HEK293 (cell line): ENCODE measurements at regions of chr1 and their contacts with region 1.

Region 1: DNA sequence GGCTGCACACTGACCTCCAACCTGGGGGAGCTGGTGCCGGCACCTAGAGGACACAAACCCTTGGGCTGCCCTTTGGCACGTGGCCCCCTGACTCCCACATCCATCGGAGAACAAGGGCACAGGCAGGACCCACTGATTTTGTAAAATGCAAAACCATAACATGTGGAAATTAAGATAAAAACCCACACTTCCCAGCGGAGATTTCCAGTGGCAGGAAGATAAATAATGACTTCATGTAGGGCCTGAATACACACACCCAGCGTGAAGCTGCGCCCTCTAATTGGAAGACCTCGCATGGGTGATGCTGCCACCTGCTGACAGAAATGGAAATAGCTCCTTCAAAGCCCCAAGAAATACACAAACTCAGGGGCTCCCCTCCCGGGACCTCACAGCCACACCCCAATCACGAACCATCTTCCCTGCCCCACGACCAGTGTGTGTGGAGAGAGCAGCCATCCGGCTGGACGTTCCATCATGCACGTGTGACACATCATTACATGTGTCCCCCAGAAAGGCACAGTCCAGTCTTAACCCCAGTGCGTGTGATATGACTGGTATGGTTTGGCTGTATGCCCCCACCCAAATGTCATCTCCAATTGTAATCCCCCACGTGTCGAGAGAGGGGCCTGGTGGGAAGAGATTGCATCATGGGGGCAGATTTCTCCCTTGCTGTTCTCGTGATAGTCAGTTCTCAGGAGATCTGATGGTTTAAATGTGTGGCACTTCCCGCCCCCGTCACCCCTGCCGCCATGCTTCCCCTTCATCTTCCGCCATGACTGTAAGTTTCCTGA is 5.7 kb upstream of the TPRG1L start:
- H3K4me3 ChIP-seq: no peak overlapping the region
- H3K27ac ChIP-seq: no peak overlapping the region
- H3K4me1 ChIP-seq: no peaks in the 10 kb centered on the region
- CTCF ChIP-seq: peak; percentile 81

Region 2: GRCh38 chr1:3410142-3410925 is 208.7 kb before region 1 on chr1:
- CTCF ChIA-PET with region 1: no interaction called
- POLR2A ChIA-PET with region 1: no interaction called
- H3K4me3 ChIP-seq: no peak overlapping the region
- H3K27ac ChIP-seq: no peak overlapping the region
- H3K4me1 ChIP-seq: peaks cover 3% of the 10 kb centered on the region; the same call in 1 of the 2 replicates
- CTCF ChIP-seq: peak; percentile 86

Region 3: DNA sequence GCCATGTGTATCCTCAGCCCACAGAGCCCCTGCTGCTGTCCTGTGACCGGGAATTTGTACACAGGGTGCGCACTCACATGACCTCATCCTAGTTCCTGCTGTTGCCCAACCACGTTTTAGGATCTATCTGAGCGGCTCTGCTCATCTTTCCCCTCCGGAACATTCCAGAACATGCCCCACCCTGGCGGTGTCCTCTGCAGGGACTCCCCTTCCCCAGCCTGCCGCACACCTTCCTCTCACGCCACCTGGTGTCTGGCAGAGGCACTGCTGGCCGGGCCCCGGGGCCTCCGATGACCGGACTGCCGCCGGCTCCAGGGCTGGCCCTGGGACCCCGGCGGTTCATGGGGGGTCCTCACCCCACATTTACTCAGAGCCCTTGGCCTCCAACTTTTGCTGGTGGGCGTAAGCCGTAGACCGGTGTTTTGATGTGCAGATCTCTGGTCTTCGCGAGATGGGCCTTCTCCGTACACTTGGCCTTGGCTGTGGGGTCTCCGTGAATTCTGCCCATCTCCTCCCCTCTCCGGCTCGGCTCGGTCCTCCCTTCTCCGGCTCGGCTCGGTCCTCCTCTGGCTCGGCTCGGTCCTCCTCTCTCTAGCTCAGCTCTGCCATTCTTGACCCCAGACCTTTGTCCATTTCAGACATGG is 135.2 kb before region 1 on chr1:
- CTCF ChIA-PET with region 1: interaction called, 11 read pairs
- POLR2A ChIA-PET with region 1: no interaction called
- H3K4me3 ChIP-seq: no peak overlapping the region
- H3K27ac ChIP-seq: no peak overlapping the region
- H3K4me1 ChIP-seq: no peaks in the 10 kb centered on the region
- CTCF ChIP-seq: no peak

Region 4: DNA sequence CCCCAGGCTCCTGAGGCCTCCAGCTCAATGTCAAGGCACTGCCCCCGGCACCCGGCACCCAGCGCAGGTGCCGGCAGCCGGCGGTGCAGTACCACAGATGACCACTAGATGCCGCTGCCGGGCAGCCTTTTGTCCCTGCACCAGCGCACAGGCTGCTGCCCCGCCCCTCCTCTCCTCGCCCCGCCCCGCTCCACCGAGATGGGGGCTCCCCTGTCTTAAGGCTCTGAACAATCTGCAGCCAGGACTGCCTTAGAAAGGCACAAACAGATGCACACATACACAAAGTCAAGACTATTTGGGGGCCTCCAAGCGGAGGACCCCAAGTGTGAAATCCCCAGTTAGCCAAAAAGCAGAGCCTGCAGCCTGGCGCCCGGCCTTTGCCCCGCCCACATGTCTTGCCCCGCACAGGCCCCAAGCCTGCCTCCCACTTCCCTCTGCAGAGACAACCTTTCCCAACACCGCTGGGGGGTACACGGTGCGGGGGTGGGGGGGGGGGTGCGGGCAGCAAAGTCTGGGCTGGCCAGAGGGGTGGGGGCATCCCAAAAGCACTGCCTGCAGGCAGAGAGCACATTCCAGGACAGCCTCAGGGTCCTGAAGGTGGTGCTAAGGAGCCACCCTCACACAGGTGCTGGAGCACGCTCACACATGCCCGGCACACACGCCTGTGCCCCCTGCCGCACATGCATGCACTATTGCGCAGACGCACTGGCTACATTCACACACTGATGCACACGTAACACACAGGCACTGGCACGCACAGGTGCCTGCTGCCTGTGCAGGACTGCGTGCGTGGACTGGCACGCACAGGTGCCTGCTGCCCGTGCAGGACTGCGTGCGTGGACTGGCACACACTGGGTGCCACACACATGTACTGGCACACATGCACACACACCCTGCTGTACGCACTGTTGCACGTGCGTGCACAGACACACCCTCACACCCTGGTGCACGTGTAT is 127.5 kb before region 1 on chr1:
- CTCF ChIA-PET with region 1: interaction called, 30 read pairs
- POLR2A ChIA-PET with region 1: interaction called, 6 read pairs
- H3K4me3 ChIP-seq: 0 out of 2 replicates have a peak overlapping the region, but pooled peaks have one; percentile 9
- H3K27ac ChIP-seq: no peak overlapping the region
- H3K4me1 ChIP-seq: no peaks in the 10 kb centered on the region
- CTCF ChIP-seq: peak; percentile 89

Region 5: GRCh38 chr1:3564921-3565827 is 53.9 kb before region 1 on chr1:
- CTCF ChIA-PET with region 1: interaction called, 120 read pairs
- POLR2A ChIA-PET with region 1: interaction called, 3 read pairs
- H3K4me3 ChIP-seq: no peak overlapping the region
- H3K27ac ChIP-seq: no peak overlapping the region
- H3K4me1 ChIP-seq: no peaks in the 10 kb centered on the region
- CTCF ChIP-seq: peak; percentile 86

Region 6: DNA sequence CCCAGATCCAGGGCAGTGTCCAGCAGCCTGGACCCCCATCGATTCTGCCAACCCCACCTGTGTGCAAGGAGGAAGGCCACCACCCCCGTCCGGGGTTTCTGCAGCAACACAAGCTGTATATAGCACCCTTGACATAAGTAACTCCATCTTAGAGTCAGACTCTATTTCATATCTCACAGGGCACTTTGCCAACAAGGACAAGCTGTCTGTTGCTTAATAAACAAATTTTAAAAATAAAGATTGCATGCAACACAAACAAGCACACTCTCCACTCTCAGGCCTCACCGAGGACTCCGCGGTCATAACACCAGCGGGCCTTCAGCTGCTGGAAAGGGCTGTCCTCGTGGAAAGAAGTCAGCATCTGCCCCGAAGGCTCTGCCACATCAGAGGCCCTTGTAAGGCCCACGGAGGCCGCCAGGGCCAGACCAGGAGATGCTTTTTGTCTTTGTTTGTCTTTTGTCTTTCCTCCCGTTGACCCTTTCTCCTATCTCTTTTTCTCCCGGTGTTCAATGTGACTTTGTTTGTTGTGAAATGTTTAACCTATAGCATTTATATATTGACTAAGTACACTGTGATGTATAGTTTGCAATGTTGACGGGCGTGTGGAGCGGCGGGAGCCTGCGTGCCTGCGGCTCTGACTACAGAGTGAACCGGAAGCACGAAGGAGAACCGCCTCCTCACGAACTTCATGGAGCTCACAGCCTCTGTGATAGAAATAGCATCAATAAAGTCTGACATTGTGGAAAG is 32.0 kb before region 1 on chr1:
- CTCF ChIA-PET with region 1: interaction called, 41 read pairs
- POLR2A ChIA-PET with region 1: no interaction called
- H3K4me3 ChIP-seq: no peak overlapping the region
- H3K27ac ChIP-seq: no peak overlapping the region
- H3K4me1 ChIP-seq: no peaks in the 10 kb centered on the region
- CTCF ChIP-seq: no peak